ENCODE measurements at regions of chr11 and their contacts with region 1.

Region 1: DNA sequence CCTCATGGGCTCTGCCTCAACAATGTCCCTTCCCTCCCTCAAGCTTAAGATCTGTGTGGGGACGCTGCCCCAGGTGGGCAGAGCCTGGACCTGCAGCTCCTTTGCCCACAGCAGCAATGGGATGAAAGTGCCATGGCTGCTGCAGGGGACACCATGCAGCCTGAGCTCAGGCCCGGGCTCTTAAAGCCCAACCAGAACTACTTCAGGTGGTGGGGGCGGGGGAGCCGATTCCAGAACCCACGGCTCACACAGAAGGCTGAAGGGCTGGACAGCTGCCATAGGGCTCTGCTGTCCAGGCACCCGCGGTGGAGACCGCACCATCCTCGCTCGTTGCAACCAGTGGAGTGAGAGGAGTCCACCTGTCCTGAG is 12.5 kb downstream of the CHID1 start:
- DNase-seq: peak; percentile 55
- ATAC-seq: peak; percentile 63
- H3K4me3 Mint-ChIP-seq: no peak overlapping the region
- H3K27ac Mint-ChIP-seq: no peak overlapping the region
- H3K4me1 Mint-ChIP-seq: no peaks in the 10 kb centered on the region
- H3K27me3 Mint-ChIP-seq: no peaks in the 10 kb centered on the region
- CTCF ChIP-seq: peak; percentile 27; the same call in 1 of the 2 replicates

Region 2: DNA sequence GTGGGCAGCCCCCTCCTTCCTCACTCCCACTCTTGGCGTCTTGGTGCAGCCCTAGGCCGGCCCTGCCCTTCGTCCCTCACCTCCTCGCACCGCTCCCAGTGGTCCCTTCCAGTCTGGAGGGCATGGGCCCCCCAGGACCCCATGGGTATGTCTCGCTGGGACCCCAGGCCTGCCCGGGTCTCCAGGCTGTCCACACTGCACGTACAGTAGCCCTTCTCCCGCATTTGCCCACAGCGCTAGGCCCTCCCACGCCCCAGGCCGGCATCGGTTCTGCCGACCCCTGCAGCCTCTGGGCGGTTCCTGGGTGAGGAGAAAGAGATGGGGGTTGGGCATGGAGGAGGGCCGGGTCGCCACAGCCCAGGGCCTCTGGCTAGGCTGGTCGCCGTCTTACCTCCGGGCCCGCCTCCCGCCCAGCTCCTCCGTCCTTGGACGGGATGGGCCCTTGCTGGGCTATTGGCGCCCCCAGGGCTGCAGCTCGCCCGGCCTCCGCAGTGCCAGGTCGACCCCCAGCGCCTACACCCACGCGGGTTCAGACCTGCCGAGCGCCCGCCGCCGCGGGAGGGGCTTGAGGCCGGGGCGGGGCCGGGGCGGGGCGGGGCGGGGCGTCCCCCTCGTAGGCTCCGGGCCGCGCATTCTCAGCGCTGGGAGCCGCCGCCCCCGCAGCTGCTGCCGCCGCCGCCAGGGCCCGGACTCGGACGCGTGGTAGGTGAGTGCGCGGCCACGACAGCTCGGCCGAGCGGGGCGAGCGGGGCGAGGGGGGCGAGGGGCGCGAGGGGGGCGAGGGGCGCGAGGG is 65.6 kb before region 1 on chr11 and contains the start of gene CD151:
- CTCF ChIA-PET with region 1: interaction called, 10 read pairs
- POLR2A ChIA-PET with region 1: no interaction called
- DNase-seq: peak; percentile 70
- ATAC-seq: peak; percentile 33
- H3K4me3 Mint-ChIP-seq: peak within 1 kb of the TSS; percentile 73
- H3K27ac Mint-ChIP-seq: no peak within 1 kb of the TSS
- H3K4me1 Mint-ChIP-seq: peaks cover 40% of the 10 kb centered on the region
- H3K27me3 Mint-ChIP-seq: peaks cover 32% of the 10 kb centered on the region
- CTCF ChIP-seq: no peak
- total RNA-seq, gene CD151: 115 to 127 TPM (median 116 TPM) in 3 replicates

Region 3: DNA sequence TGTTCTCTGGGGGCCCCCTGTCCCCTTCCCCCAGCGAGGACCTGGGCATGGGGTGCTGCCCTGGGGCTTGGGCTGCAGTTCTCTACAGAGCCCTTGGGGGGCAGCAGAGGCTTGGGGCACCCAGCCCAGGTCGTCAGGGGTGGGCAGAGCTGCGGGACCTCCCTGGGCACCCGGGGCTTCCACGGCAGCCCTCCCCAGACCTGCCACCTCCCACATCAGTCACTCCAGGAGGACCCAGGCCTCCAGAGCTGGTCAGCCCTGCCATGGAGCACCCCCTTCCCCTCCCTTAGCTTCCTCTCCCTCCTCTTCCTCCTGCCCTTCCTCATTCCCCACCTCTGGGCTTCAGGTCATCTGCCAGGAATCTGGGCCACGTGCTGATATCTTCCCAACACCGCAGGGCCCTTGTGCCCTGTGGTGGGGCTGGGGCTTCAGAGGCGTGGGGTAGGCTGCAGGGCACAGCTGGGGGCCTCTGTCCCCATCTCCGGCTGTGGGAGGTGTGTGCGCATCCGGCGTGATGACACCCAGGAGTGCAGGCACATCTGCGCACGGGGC is 49.7 kb before region 1 on chr11:
- CTCF ChIA-PET with region 1: interaction called, 16 read pairs
- POLR2A ChIA-PET with region 1: interaction called, 3 read pairs
- DNase-seq: peak; percentile 75
- ATAC-seq: peak; percentile 5; the same call in 1 of the 2 replicates
- H3K4me3 Mint-ChIP-seq: peak overlapping the region; percentile 63
- H3K27ac Mint-ChIP-seq: no peak overlapping the region
- H3K4me1 Mint-ChIP-seq: peaks cover 19% of the 10 kb centered on the region
- H3K27me3 Mint-ChIP-seq: no peaks in the 10 kb centered on the region
- CTCF ChIP-seq: peak; percentile 83

Region 4: DNA sequence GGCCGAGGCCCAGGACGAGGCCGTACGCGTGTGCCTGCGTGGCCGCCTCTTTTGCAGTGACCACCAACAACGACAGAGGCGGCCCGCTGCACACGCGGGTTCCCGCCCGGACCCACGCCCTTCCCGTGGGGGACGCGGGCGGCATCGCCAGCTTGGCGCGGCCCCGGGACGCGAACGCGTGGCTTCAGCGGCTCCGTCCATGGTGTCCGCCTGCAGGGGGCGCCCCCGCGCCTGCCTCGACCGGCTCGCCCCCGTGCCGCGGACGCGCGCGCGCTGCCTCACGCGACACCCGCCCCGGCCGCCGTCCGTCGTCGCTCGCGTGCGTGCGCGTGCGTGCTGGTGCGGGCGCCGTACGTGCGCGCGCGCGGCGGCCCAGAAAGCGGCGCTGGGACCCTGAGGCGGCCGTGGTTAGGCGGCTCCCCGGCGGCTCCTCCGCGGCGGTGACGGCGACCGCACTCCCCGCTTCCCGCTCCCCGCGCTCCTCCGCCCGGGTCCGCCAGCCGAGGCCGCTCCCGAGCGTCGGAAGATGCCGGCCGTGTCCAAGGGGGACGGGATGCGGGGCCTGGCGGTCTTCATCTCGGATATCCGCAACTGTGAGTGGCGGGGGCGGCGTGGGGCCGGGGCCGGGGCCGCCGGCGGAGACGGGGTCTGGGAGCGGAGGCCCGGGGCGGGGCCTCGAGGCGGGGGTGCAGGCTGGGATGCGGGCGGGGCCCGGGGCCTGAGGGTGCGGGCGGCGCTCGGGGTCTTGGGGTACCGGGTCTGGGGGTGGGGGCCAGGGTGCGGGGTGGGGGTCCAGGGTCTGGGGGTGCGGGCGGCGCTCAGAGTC is 27.6 kb after region 1 on chr11 and contains the start of gene AP2A2:
- CTCF ChIA-PET with region 1: interaction called, 10 read pairs
- POLR2A ChIA-PET with region 1: no interaction called
- DNase-seq: peak; percentile 87
- ATAC-seq: peak; percentile 67
- H3K4me3 Mint-ChIP-seq: peak within 1 kb of the TSS; percentile 84
- H3K27ac Mint-ChIP-seq: peak within 1 kb of the TSS; percentile 82; the same call in 1 of the 2 replicates
- H3K4me1 Mint-ChIP-seq: peaks cover 14% of the 10 kb centered on the region
- H3K27me3 Mint-ChIP-seq: no peaks in the 10 kb centered on the region
- CTCF ChIP-seq: peak; percentile 64
- total RNA-seq, gene AP2A2: 47.1 to 52.3 TPM (median 51.0 TPM) in 3 replicates

Region 5: DNA sequence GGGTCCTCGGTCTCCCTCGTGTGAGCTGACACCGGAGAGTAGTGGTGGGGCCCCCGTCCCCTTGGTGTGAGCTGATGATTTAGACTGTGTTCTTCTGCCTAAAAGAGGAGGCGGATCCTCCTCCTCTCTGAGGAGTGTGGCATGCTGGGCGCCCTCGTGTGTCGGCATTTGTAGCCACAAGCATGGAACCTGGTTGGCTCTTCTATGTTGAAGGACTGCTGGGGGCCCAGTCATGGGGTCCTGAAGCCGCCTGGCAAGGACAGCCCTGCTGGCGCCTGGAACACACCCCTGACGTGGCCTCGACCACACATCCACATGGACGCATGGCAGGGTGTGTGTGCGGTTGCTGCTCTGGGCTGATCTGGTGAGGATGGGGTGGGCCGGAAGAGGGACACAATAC is 77.7 kb after region 1 on chr11:
- CTCF ChIA-PET with region 1: interaction called, 12 read pairs
- POLR2A ChIA-PET with region 1: no interaction called
- DNase-seq: peak; percentile 72
- ATAC-seq: peak; percentile 89
- H3K4me3 Mint-ChIP-seq: no peak overlapping the region
- H3K27ac Mint-ChIP-seq: peak overlapping the region; percentile 68
- H3K4me1 Mint-ChIP-seq: peaks cover 12% of the 10 kb centered on the region
- H3K27me3 Mint-ChIP-seq: no peaks in the 10 kb centered on the region
- CTCF ChIP-seq: no peak

Region 6: GRCh38 chr11:1050581-1051355 is 152.6 kb after region 1 on chr11:
- CTCF ChIA-PET with region 1: interaction called, 18 read pairs
- POLR2A ChIA-PET with region 1: no interaction called
- DNase-seq: peak; percentile 85
- ATAC-seq: peak; percentile 95
- H3K4me3 Mint-ChIP-seq: no peak overlapping the region
- H3K27ac Mint-ChIP-seq: no peak overlapping the region
- H3K4me1 Mint-ChIP-seq: no peaks in the 10 kb centered on the region
- H3K27me3 Mint-ChIP-seq: peaks cover 3% of the 10 kb centered on the region; the same call in 1 of the 2 replicates
- CTCF ChIP-seq: peak; percentile 85